ENCODE measurements at regions of chr16 and their contacts with region 1.

Region 1: GRCh38 chr16:57734925-57735754 is 430 bp upstream of the KATNB1 start:
- DNase-seq: peak; percentile 99
- ATAC-seq: peak; percentile 97 to 98
- H3K4me3 ChIP-seq: peak overlapping the region; percentile 79 to 99 (median 90)
- H3K27ac ChIP-seq: peak overlapping the region; percentile 84 to 89 (median 87)
- H3K4me1 ChIP-seq: peaks cover 14 to 19% of the 10 kb centered on the region in 2 donors
- H3K27me3 ChIP-seq: no peaks in the 10 kb centered on the region
- CTCF ChIP-seq: peak in 1 of 5 experiments; percentile 10
- POLR2A ChIP-seq: peak in 1 of 2 donors; percentile 31

Region 2: DNA sequence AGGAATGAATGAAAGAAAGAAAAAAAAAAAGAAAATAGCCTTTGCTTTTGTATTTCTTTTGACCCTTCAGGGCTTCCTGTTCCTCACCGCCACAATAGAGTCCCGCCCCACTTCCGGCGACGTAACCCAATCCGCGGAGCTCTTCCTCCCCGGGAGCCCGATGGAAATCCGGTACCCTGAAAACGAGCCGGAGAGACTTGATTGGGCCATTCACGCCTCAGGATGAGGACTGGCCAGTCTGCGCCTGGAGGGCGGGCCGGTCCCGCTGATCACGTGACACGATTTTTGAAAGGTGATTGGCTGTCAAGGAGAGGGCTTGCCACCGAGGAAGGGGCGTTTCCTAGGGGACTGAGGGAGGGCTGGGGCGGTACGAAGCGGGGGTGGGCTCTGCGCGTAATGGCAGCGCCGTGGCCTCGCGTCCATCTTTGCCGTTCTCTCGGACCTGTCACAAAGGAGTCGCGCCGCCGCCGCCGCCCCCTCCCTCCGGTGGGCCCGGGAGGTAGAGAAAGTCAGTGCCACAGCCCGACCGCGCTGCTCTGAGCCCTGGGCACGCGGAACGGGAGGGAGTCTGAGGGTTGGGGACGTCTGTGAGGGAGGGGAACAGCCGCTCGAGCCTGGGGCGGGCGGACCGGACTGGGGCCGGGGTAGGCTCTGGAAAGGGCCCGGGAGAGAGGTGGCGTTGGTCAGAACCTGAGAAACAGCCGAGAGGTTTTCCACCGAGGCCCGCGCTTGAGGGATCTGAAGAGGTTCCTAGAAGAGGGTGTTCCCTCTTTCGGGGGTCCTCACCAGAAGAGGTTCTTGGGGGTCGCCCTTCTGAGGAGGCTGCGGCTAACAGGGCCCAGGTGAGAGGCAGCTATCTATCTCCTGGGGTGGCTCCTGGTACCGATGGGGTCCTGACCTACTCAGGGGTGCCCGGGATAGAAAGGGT is 548.9 kb before region 1 on chr16 and contains the starts of genes PSME3IP1 and RSPRY1:
- in situ Hi-C with region 1: no loop called
- intact Hi-C with region 1: loop called (anchors 10 kb)
- DNase-seq: peak; percentile 99
- ATAC-seq: peak; percentile 97 to 99
- H3K4me3 ChIP-seq: peak within 1 kb of the TSS; percentile 81 to 94 (median 92)
- H3K27ac ChIP-seq: peak within 1 kb of the TSS; percentile 92 to 97 (median 95)
- H3K4me1 ChIP-seq: peaks cover 32 to 40% of the 10 kb centered on the region in 2 donors
- H3K27me3 ChIP-seq: no peaks in the 10 kb centered on the region
- CTCF ChIP-seq: peak in 2 of 5 experiments; percentile 35 to 40
- POLR2A ChIP-seq: peak; percentile 84 to 85
- total RNA-seq, gene PSME3IP1: 43.8 to 57.6 (median 53.4) TPM
- total RNA-seq, gene RSPRY1: 15.4 to 24.1 (median 20.7) TPM

Region 3: GRCh38 chr16:57447186-57447962 is 287.8 kb before region 1 on chr16 and contains the starts of genes CIAPIN1 and COQ9:
- in situ Hi-C with region 1: loop called in 1 of 4 experiments (anchors 25 kb)
- intact Hi-C with region 1: loop called (anchors 5 kb)
- DNase-seq: peak; percentile 89 to 94
- ATAC-seq: peak; percentile 92 to 97
- H3K4me3 ChIP-seq: peak within 1 kb of the TSS; percentile 82 to 97 (median 95)
- H3K27ac ChIP-seq: peak within 1 kb of the TSS; percentile 98 to 99 (median 98)
- H3K4me1 ChIP-seq: peaks cover 32 to 38% of the 10 kb centered on the region in 2 donors
- H3K27me3 ChIP-seq: no peaks in the 10 kb centered on the region
- CTCF ChIP-seq: no peak
- POLR2A ChIP-seq: peak; percentile 95 to 97
- total RNA-seq, gene CIAPIN1: 31.0 to 38.8 (median 37.9) TPM
- total RNA-seq, gene COQ9: 107 to 171 (median 135) TPM

Region 4: DNA sequence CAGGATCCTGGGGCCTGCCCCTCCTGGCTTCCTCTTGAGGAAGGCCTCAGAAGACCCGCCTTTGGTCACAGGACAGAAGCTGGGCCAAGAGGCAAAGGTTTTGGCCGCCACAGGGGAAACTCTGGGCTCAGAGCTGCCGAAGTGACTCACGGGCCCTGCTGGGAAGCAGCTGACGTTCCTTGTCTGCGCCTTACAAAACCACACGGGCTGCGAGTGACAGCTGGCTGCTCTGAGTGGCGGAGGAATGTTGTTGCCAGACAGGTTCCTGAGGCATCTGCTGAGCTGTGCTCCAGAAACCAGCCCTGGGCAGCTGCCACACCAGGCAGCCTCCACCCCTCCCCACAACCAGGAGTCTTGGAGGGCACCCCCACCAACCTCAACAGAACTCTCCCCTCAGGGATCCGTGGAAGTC is 81.2 kb after region 1 on chr16:
- in situ Hi-C with region 1: no loop called
- intact Hi-C with region 1: loop called (anchors 5 kb)
- DNase-seq: peak; percentile 97 to 98
- ATAC-seq: peak; percentile 98
- H3K4me3 ChIP-seq: no peak overlapping the region
- H3K27ac ChIP-seq: peak overlapping the region; percentile 80 to 87 (median 85)
- H3K4me1 ChIP-seq: peaks cover 15 to 17% of the 10 kb centered on the region in 2 donors
- H3K27me3 ChIP-seq: no peaks in the 10 kb centered on the region
- CTCF ChIP-seq: no peak
- POLR2A ChIP-seq: peak in 1 of 2 donors; percentile 19

Region 5: GRCh38 chr16:58129097-58129936 is 394.2 kb after region 1 on chr16 and contains the start of gene CFAP20:
- in situ Hi-C with region 1: no loop called
- intact Hi-C with region 1: loop called (anchors 5 kb)
- DNase-seq: peak; percentile 99
- ATAC-seq: peak; percentile 99 to 100
- H3K4me3 ChIP-seq: peak within 1 kb of the TSS; percentile 84 to 92 (median 88)
- H3K27ac ChIP-seq: peak within 1 kb of the TSS; percentile 86 to 91 (median 90)
- H3K4me1 ChIP-seq: peaks cover 25 to 31% of the 10 kb centered on the region in 2 donors
- H3K27me3 ChIP-seq: no peaks in the 10 kb centered on the region
- CTCF ChIP-seq: peak in 2 of 5 experiments; percentile 15 to 16
- POLR2A ChIP-seq: peak; percentile 83 to 96
- total RNA-seq, gene CFAP20: 6.5 to 16.0 (median 9.1) TPM

Region 6: DNA sequence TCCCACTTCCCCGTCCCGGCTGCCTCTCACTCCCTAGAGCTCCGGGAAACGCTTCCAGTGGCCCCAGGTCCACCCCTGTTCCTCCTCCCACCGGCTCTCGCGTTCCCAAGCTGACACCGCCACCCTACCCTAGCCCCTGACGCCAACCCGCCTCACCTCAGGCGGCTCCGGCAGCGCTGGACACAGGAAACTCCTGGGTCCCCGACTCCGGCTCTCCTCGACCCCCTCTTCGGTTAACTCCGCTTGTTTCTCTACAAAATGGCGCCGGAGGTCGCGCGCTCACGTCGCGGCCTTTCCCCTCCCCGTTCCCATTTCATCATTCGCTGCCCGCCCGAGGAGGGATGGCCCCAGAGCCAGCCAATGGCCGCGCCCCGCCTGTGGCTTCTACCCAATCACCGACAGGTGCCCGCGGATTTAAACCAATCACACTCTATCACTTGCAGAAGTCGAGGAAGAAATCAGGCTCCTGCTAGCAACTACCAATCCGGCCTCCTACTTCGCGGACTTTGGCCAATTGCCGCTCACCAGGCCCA is 894.5 kb after region 1 on chr16 and contains the start of gene CNOT1:
- in situ Hi-C with region 1: no loop called
- intact Hi-C with region 1: loop called (anchors 5 kb)
- DNase-seq: peak; percentile 99 to 100
- ATAC-seq: peak; percentile 92 to 96
- H3K4me3 ChIP-seq: peak within 1 kb of the TSS; percentile 85 to 92 (median 88)
- H3K27ac ChIP-seq: peak within 1 kb of the TSS; percentile 94 to 99 (median 96)
- H3K4me1 ChIP-seq: peaks cover 21 to 35% of the 10 kb centered on the region in 2 donors
- H3K27me3 ChIP-seq: no peaks in the 10 kb centered on the region
- CTCF ChIP-seq: peak in 1 of 5 experiments; percentile 15
- POLR2A ChIP-seq: peak; percentile 87 to 89
- total RNA-seq, gene CNOT1: 54.7 to 119 (median 87.2) TPM